ENCODE measurements at regions of chr9 and their contacts with region 1.

Region 1: DNA sequence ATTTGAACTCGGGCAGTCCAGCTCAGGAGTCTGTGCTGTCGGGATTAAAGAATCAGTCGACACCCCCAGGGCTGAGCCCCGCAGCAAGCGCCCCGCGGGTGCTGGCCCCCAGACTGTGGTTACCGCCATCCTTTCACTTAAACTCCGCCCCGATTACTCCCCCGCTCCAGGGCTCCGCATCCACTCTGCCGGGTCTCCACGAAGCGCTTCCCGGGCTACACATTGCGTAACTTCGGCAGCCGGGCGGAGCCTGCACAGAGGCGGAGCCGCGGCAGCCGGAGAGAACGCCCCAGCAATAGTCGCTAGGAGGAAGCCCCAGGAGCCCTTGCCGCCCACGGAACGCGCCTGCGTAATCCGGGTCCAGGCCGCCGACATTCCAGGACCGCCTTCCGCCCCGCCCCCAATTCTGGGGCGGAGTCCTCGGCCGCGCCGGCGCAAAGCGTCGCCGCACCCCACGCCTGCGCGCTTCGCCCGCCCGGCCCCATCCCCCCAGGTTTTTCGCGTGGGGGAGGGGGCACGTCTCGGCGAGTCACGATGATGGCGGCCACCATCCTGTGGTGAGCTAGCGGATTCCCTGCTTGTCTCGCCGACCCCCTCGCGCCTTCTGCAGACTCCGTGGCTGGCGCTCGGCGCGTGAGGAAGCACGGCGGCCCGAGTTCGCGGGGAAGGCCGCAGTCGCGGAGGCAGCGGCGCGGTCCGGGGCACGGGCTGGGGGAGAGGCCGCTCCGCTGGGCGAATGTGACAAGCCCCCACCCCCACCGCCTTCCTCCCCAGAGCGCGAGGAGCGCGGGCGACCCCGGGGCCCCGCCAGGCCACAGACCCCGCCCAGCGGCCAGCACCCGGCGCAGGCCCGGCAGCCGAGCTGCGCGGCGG is at the start of gene RAD23B:
- DNase-seq: peak; percentile 99
- H3K4me3 Mint-ChIP-seq: peak within 1 kb of the TSS; percentile 86
- H3K27ac Mint-ChIP-seq: peak within 1 kb of the TSS; percentile 88
- H3K4me1 Mint-ChIP-seq: peaks cover 45% of the 10 kb centered on the region
- H3K27me3 Mint-ChIP-seq: no peaks in the 10 kb centered on the region
- total RNA-seq, gene RAD23B: 106 to 109 TPM

Region 2: DNA sequence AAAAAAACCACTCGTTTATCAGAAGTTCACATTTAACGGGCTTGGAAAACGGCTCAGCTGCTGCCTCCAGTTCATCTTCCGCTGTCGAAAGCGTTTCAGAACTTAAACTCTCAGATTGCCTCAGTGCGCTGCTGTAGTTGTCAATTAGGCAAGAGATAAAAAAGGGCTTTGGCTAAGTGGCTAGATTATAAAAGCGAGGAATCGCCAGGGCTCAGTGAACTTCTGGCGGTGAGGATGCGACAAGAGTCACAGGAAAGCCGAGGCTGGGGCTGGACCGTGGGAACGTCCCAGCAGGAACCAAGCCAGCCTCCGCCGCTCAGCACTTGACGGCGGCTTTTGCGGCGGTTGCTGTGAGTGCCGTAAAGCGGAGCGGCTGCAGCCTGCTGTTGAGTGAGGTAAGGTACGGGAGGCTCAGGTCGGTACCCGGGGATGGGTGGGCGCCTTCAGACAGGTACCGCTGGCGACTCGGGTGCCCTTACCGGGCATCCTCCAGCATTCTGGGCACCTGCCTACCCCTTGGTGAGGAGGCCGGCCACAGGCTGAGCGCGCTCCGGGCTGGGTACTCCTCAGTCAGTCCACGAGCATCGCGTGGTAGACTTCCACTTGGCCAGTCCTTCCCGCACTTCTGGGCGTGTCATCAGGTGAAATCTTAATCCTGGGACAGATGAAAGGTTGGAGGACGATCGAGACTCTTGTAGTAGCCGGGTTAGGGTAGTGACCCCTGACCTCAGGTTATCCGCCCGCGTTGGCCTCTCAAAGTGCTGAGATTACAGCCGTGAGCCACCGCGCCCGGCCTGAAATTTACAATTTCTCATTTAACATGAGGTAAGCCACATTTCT is 1725.0 kb before region 1 on chr9 and contains the start of gene FKTN:
- CTCF ChIA-PET with region 1: no interaction called
- intact Hi-C with region 1: loop called (anchors 10 kb)
- DNase-seq: peak; percentile 88
- H3K4me3 Mint-ChIP-seq: peak within 1 kb of the TSS; percentile 85
- H3K27ac Mint-ChIP-seq: peak within 1 kb of the TSS; percentile 77
- H3K4me1 Mint-ChIP-seq: peaks cover 16% of the 10 kb centered on the region
- H3K27me3 Mint-ChIP-seq: no peaks in the 10 kb centered on the region
- total RNA-seq, gene FKTN: 8.0 to 9.6 TPM

Region 3: DNA sequence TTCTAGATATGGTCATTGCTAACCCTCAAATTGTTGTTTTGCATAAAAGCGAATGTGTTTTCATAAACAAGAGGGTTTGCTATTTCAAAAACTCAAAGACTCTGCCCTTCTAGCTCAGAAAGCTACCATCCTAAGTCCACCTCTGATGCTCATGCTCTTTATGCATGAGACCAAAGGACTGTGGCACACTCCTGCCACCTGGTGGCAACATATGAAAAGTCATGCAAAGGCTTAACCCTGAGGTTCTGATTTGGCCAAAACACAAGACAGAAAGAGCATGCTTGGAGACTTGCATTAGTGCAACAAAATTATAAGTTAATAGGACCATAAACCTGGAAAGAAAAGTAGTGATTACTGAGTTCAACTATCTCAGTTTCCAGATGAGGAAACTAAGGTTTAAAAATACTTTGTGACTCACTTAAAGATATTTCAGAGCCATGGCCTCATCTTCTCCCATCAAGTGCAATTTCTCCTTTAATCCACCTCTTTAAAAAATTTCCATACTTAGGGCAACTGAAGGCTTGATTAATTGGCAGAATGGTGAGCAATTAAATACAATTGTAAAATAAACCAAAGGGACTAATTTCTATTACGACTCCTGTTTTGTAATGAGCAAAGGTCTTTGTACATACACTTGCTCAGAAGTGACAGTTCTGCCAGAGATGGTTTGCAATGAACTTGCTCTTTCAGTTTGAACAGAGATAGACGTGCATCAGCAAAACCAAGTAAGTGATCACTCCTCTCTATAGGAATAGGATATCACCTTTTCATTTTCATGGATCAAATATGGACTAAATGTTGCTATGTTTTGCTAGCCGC is 110.6 kb before region 1 on chr9:
- CTCF ChIA-PET with region 1: interaction called, 5 read pairs
- intact Hi-C with region 1: loop called (anchors 2 kb)
- DNase-seq: peak; percentile 82
- H3K4me3 Mint-ChIP-seq: no peak overlapping the region
- H3K27ac Mint-ChIP-seq: no peak overlapping the region
- H3K4me1 Mint-ChIP-seq: peaks cover 15% of the 10 kb centered on the region
- H3K27me3 Mint-ChIP-seq: no peaks in the 10 kb centered on the region

Region 4: GRCh38 chr9:107243751-107244150 is 39.2 kb before region 1 on chr9:
- CTCF ChIA-PET with region 1: interaction called, 4 read pairs
- intact Hi-C with region 1: loop called (anchors 1 kb)
- DNase-seq: peak; percentile 79
- H3K4me3 Mint-ChIP-seq: no peak overlapping the region
- H3K27ac Mint-ChIP-seq: peak overlapping the region; percentile 73
- H3K4me1 Mint-ChIP-seq: peaks cover 33% of the 10 kb centered on the region
- H3K27me3 Mint-ChIP-seq: peaks cover 1% of the 10 kb centered on the region

Region 5: DNA sequence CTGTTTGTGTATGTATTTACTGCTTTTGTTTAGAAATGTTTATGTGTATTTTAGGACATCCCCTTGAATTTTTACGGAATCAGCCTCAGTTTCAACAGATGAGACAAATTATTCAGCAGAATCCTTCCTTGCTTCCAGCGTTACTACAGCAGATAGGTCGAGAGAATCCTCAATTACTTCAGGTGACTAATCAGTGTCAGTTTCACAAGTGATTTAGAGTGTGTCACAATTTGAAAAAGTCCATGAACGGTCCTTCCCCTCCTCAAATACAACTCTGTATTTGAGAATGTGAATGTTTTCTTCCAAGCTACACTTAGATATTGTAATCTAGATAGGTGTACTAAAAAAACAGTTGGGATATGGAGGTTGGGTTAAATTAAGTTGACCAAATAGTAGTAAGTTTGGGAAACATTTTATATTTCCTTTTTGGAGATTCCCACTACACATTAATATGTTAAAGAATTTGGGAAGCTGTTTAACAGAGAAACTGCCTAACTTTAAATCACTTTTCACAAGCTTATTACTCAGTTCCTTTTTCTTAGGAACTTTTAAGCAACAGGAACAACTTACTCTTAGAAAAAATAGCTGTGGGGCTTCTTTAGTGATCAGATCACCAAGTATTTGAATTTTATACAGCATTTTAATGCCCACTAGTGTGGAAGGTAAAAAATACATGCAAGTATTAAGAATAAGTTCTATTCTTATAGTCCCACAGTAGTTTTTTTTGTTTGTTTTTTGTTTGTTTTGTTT is 41.0 kb after region 1 on chr9:
- CTCF ChIA-PET with region 1: interaction called, 4 read pairs
- intact Hi-C with region 1: loop called (anchors 5 kb)
- DNase-seq: no peak
- H3K4me3 Mint-ChIP-seq: no peak overlapping the region
- H3K27ac Mint-ChIP-seq: peak overlapping the region; percentile 13
- H3K4me1 Mint-ChIP-seq: peaks cover 18% of the 10 kb centered on the region
- H3K27me3 Mint-ChIP-seq: no peaks in the 10 kb centered on the region

Region 6: DNA sequence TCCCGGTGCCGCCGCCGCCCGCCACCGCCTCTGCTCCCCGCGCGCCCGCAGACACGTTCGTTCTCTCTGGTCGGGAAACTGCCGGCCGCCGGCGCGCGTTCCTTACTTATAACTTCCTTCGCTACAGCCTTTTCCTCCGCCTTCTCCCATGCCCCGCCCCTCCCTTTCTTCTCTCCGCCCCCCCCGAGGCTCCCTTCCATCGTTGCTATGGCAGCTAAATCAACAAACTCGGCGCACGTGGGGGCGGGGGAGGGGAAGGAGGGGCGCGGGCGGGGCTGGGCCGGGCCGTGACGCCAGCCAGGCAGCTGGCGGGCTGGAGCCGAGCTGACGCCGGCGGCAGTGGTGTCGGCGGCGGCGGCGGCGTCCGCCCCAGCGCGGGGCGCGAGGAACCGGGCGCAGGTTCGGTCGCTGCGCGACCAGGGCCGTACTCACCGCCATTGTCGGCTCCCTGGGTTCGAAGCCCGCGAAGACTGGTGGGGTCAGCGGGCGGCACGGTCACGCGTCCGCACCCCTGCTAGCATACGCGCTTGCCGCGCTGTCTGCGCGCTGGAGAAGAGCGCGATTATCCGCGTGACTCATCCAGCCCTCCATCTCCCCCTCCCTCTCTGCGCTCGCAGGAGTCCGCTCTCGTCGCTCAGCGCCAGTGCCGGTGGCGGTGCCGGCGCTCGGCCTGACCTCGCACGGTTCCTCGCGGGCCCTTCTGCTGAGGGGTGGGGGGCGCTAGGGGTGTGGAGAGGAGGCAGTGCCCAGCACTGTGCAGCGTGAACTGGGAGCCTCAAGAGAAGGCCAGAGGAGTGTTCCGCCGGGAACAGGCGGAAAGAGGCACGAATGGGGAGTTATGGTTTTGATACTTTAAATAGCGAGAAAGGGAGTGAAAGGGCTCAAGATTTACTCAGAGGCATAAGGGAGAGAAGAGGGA is 207.0 kb after region 1 on chr9 and contains the start of gene KLF4:
- CTCF ChIA-PET with region 1: no interaction called
- intact Hi-C with region 1: loop called (anchors 5 kb)
- DNase-seq: peak; percentile 81
- H3K4me3 Mint-ChIP-seq: peak within 1 kb of the TSS; percentile 65
- H3K27ac Mint-ChIP-seq: no peak within 1 kb of the TSS
- H3K4me1 Mint-ChIP-seq: peaks cover 7% of the 10 kb centered on the region
- H3K27me3 Mint-ChIP-seq: peaks cover 66% of the 10 kb centered on the region
- total RNA-seq, gene KLF4: 3.4 TPM

Region 7: DNA sequence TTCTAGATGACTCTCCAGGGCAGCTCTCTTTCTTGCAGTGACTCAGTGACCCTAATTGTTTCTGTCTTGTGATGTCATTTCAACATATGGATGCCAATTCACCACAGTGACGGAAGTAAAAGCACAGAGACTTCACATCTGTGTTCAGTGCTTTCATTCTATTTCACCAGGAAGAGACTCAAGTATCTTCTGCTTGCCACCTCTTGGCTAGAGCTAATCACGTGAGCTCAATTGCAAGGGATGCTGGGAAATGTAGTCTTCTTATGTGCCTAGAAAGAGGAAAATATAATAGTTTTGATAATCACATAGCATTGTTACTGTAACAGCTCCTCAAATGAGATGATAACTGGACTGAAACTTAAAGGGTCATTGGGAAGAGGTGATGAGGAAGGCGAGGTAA is 659.9 kb after region 1 on chr9:
- CTCF ChIA-PET with region 1: no interaction called
- intact Hi-C with region 1: no loop called
- DNase-seq: no peak
- H3K4me3 Mint-ChIP-seq: no peak overlapping the region
- H3K27ac Mint-ChIP-seq: no peak overlapping the region
- H3K4me1 Mint-ChIP-seq: no peaks in the 10 kb centered on the region
- H3K27me3 Mint-ChIP-seq: peaks cover 5% of the 10 kb centered on the region

Region 8: GRCh38 chr9:109012876-109013678 is 1730.1 kb after region 1 on chr9 and contains the start of gene CTNNAL1:
- CTCF ChIA-PET with region 1: no interaction called
- intact Hi-C with region 1: loop called (anchors 2 kb)
- DNase-seq: peak; percentile 86
- H3K4me3 Mint-ChIP-seq: peak within 1 kb of the TSS; percentile 95
- H3K27ac Mint-ChIP-seq: peak within 1 kb of the TSS; percentile 68
- H3K4me1 Mint-ChIP-seq: peaks cover 28% of the 10 kb centered on the region
- H3K27me3 Mint-ChIP-seq: no peaks in the 10 kb centered on the region
- total RNA-seq, gene CTNNAL1: 18.4 to 19.0 TPM

Measured in activated naive CD4-positive, alpha-beta T cell treated with anti-CD3 and anti-CD28 coated beads for 36 hours (primary cell).